Naive thymus-derived CD4-positive, alpha-beta T cell (primary cell): ENCODE measurements at regions of chr13 and their contacts with region 1.

Region 1: GRCh38 chr13:51452361-51453206 is at the start of gene INTS6:
- DNase-seq: peak; percentile 97 to 100 (median 99)
- ATAC-seq: peak; percentile 91
- H3K4me3 ChIP-seq: peak within 1 kb of the TSS; percentile 81
- H3K4me3 Mint-ChIP-seq: peak within 1 kb of the TSS; percentile 86 to 99 (median 94)
- H3K27ac ChIP-seq: peak within 1 kb of the TSS; percentile 99
- H3K27ac Mint-ChIP-seq: peak within 1 kb of the TSS; percentile 92 to 99 (median 96)
- H3K4me1 ChIP-seq: peaks cover 27 to 32% of the 10 kb centered on the region in 2 donors
- H3K4me1 Mint-ChIP-seq: peaks cover 19 to 66% (median 45%) of the 10 kb centered on the region in 7 donors
- H3K27me3 ChIP-seq: no peaks in the 10 kb centered on the region
- H3K27me3 Mint-ChIP-seq: no peaks in the 10 kb centered on the region
- total RNA-seq, gene INTS6: 60.9 to 67.0 (median 62.7) TPM

Region 2: DNA sequence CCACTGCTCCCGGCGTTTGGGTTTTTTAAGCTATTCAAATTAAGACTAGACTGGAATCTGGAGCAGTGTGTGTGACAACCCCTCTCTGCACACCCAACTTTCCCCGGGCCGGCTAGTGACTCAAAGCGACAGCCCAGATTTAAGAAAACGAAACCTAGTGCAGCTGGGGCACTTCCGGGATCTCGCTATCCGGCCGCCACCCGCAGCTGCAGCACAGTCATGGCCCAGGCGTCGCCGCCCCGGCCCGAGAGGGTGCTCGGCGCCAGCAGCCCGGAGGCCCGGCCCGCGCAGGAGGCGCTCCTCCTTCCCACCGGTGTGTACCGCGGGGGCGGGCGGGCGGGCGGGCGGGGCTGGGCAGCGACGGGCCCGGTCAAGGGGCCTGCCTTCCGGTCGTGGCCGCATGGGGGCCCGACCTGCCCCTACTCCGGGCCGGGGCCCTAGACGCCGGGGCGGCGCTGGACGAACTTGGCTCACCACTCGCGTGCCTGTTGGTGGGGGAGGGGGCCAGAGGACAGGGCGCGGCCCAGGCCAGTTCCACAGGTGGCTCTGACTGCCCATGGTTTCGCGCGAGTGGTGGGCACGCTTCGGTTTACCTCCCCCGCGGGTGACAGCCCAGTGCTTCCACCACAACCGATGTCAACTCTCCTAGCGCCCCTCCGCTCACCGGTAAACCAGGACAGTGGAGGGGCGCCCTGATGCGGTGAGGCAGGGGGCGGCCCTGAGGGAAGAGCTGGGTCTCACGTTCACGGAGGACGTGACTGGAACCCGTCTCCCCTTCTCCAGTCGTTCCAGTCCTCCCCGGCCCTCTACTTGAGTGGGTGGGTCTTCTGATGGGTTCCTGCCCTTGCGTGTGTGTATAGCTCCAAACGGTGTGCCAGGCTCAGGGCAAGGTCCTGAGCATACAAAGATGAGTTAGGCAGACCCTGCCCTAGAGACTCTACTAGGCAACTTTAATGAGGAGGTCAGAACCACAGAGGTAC is 1956.5 kb before region 1 on chr13 and contains the start of gene PHF11:
- CTCF ChIA-PET with region 1: no interaction called
- POLR2A ChIA-PET with region 1: no interaction called
- intact Hi-C with region 1: loop called (anchors 2 to 5 kb)
- DNase-seq: peak; percentile 66 to 86 (median 83)
- ATAC-seq: peak; percentile 90
- H3K4me3 ChIP-seq: peak within 1 kb of the TSS; percentile 77
- H3K4me3 Mint-ChIP-seq: peak within 1 kb of the TSS; percentile 91 to 99 (median 97)
- H3K27ac ChIP-seq: peak within 1 kb of the TSS; percentile 90
- H3K27ac Mint-ChIP-seq: peak within 1 kb of the TSS; percentile 81 to 100 (median 99)
- H3K4me1 ChIP-seq: peaks cover 25 to 34% of the 10 kb centered on the region in 2 donors
- H3K4me1 Mint-ChIP-seq: peaks cover 34 to 59% (median 53%) of the 10 kb centered on the region in 7 donors
- H3K27me3 ChIP-seq: no peaks in the 10 kb centered on the region
- H3K27me3 Mint-ChIP-seq: no peaks in the 10 kb centered on the region
- total RNA-seq, gene PHF11: 96.0 to 132 (median 126) TPM

Region 3: GRCh38 chr13:50123862-50124536 is 1328.6 kb before region 1 on chr13:
- CTCF ChIA-PET with region 1: no interaction called
- POLR2A ChIA-PET with region 1: interaction called, 9 read pairs
- intact Hi-C with region 1: loop called (anchors 1 to 2 kb)
- DNase-seq: peak in 7 of 9 donors; percentile 46 to 88 (median 64)
- ATAC-seq: peak; percentile 82
- H3K4me3 ChIP-seq: peak overlapping the region; percentile 52
- H3K4me3 Mint-ChIP-seq: peak overlapping the region; percentile 86 to 96 (median 93)
- H3K27ac ChIP-seq: peak overlapping the region; percentile 95
- H3K27ac Mint-ChIP-seq: peak overlapping the region; percentile 90 to 99 (median 97)
- H3K4me1 ChIP-seq: peaks cover 24 to 29% of the 10 kb centered on the region in 2 donors
- H3K4me1 Mint-ChIP-seq: peaks cover 25 to 61% (median 50%) of the 10 kb centered on the region in 7 donors
- H3K27me3 ChIP-seq: peaks cover 0 to 11% of the 10 kb centered on the region in 2 donors
- H3K27me3 Mint-ChIP-seq: peaks cover 1 to 15% (median 12%) of the 10 kb centered on the region in 5 donors

Region 4: GRCh38 chr13:50731400-50731799 is 721.2 kb before region 1 on chr13:
- CTCF ChIA-PET with region 1: no interaction called
- POLR2A ChIA-PET with region 1: no interaction called
- intact Hi-C with region 1: no loop called
- DNase-seq: no peak
- ATAC-seq: no peak
- H3K4me3 ChIP-seq: no peak overlapping the region
- H3K4me3 Mint-ChIP-seq: no peak overlapping the region
- H3K27ac ChIP-seq: no peak overlapping the region
- H3K27ac Mint-ChIP-seq: peak overlapping the region in 1 of 9 donors; percentile 58
- H3K4me1 ChIP-seq: no peaks in the 10 kb centered on the region
- H3K4me1 Mint-ChIP-seq: peaks cover 0 to 16% (median 0%) of the 10 kb centered on the region in 7 donors
- H3K27me3 ChIP-seq: no peaks in the 10 kb centered on the region
- H3K27me3 Mint-ChIP-seq: peaks cover 0 to 25% (median 19%) of the 10 kb centered on the region in 5 donors

Region 5: DNA sequence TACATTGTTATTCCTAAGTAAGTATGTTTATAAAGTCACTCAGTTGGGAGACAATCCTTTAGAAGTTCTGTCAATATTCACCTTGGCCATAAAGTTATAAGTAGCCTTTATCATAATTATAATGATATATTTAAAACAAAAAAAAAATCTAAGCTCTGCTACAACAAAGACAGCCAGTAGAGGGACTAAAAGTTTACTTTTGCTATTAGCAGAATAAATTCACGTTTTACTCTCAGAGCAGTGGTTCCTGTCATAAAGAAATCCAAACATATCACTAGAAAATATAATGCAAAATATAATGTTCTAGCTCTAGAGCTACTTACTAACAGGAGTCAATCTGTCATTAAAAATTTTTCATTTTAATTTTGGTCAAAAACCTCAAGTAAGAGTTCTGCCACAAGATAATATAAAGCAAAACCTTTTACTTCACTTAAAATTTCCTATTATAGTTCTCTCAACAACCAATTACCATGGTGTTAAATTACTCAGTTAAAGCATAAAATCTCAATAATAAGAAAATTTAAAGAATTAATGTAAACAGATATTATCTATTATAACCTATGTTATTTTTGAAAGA is 17.5 kb before region 1 on chr13:
- CTCF ChIA-PET with region 1: interaction called, 4 read pairs
- POLR2A ChIA-PET with region 1: interaction called, 13 read pairs
- intact Hi-C with region 1: loop called (anchors 1 kb)
- DNase-seq: peak in 6 of 9 donors; percentile 19 to 50 (median 33)
- ATAC-seq: peak; percentile 47
- H3K4me3 ChIP-seq: no peak overlapping the region
- H3K4me3 Mint-ChIP-seq: no peak overlapping the region
- H3K27ac ChIP-seq: no peak overlapping the region
- H3K27ac Mint-ChIP-seq: peak overlapping the region in 1 of 9 donors; percentile 61
- H3K4me1 ChIP-seq: no peaks in the 10 kb centered on the region
- H3K4me1 Mint-ChIP-seq: peaks cover 8 to 47% (median 25%) of the 10 kb centered on the region in 7 donors
- H3K27me3 ChIP-seq: no peaks in the 10 kb centered on the region
- H3K27me3 Mint-ChIP-seq: no peaks in the 10 kb centered on the region

Region 6: GRCh38 chr13:51614350-51614786 is 161.8 kb after region 1 on chr13:
- CTCF ChIA-PET with region 1: interaction called, 7 read pairs
- POLR2A ChIA-PET with region 1: interaction called, 44 read pairs
- intact Hi-C with region 1: loop called in 1 of 2 experiments (anchors 1 kb)
- DNase-seq: peak in 8 of 9 donors; percentile 33 to 65 (median 58)
- ATAC-seq: peak; percentile 92
- H3K4me3 ChIP-seq: peak overlapping the region; percentile 59
- H3K4me3 Mint-ChIP-seq: peak overlapping the region; percentile 62 to 90 (median 81)
- H3K27ac ChIP-seq: peak overlapping the region; percentile 67
- H3K27ac Mint-ChIP-seq: peak overlapping the region; percentile 79 to 98 (median 93)
- H3K4me1 ChIP-seq: peaks cover 3 to 4% of the 10 kb centered on the region in 2 donors
- H3K4me1 Mint-ChIP-seq: peaks cover 11 to 26% (median 16%) of the 10 kb centered on the region in 7 donors
- H3K27me3 ChIP-seq: no peaks in the 10 kb centered on the region
- H3K27me3 Mint-ChIP-seq: peaks cover 0 to 2% (median 0%) of the 10 kb centered on the region in 5 donors

Region 7: GRCh38 chr13:51803422-51804294 is 351.1 kb after region 1 on chr13 and contains the start of gene DHRS12:
- CTCF ChIA-PET with region 1: interaction called, 3 read pairs
- POLR2A ChIA-PET with region 1: interaction called, 130 read pairs
- intact Hi-C with region 1: loop called (anchors 1 kb)
- DNase-seq: peak; percentile 83 to 93 (median 92)
- ATAC-seq: peak; percentile 83
- H3K4me3 ChIP-seq: peak within 1 kb of the TSS; percentile 81
- H3K4me3 Mint-ChIP-seq: peak within 1 kb of the TSS; percentile 84 to 99 (median 96)
- H3K27ac ChIP-seq: peak within 1 kb of the TSS; percentile 100
- H3K27ac Mint-ChIP-seq: peak within 1 kb of the TSS; percentile 99 to 100 (median 100)
- H3K4me1 ChIP-seq: peaks cover 29 to 32% of the 10 kb centered on the region in 2 donors
- H3K4me1 Mint-ChIP-seq: peaks cover 28 to 70% (median 52%) of the 10 kb centered on the region in 7 donors
- H3K27me3 ChIP-seq: no peaks in the 10 kb centered on the region
- H3K27me3 Mint-ChIP-seq: peaks cover 0 to 6% (median 0%) of the 10 kb centered on the region in 5 donors
- total RNA-seq, gene DHRS12: 6.7 to 25.3 (median 20.1) TPM

Region 8: GRCh38 chr13:52128714-52129700 is 676.4 kb after region 1 on chr13 and contains the start of gene NEK5:
- CTCF ChIA-PET with region 1: no interaction called
- POLR2A ChIA-PET with region 1: no interaction called
- intact Hi-C with region 1: loop called in 1 of 2 experiments (anchors 5 kb)
- DNase-seq: peak; percentile 36 to 75 (median 55)
- ATAC-seq: peak; percentile 82
- H3K4me3 ChIP-seq: peak within 1 kb of the TSS; percentile 51
- H3K4me3 Mint-ChIP-seq: peak within 1 kb of the TSS; percentile 85 to 94 (median 88)
- H3K27ac ChIP-seq: no peak within 1 kb of the TSS
- H3K27ac Mint-ChIP-seq: peak within 1 kb of the TSS in 4 of 9 donors; percentile 3 to 19 (median 6)
- H3K4me1 ChIP-seq: peaks cover 11 to 13% of the 10 kb centered on the region in 2 donors
- H3K4me1 Mint-ChIP-seq: peaks cover 11 to 21% (median 18%) of the 10 kb centered on the region in 7 donors
- H3K27me3 ChIP-seq: no peaks in the 10 kb centered on the region
- H3K27me3 Mint-ChIP-seq: peaks cover 0 to 14% (median 6%) of the 10 kb centered on the region in 5 donors
- total RNA-seq, gene NEK5: not detected